PC-9 (cell line): ENCODE measurements at regions of chr15 and their contacts with region 1.

Region 1: GRCh38 chr15:49066374-49066773 is 20.1 kb upstream of the SECISBP2L start:
- DNase-seq: no peak
- H3K4me3 ChIP-seq: no peak overlapping the region
- H3K27ac ChIP-seq: no peak overlapping the region
- H3K4me1 ChIP-seq: no peaks in the 10 kb centered on the region
- H3K27me3 ChIP-seq: peaks cover 8% of the 10 kb centered on the region; the same call in 1 of the 2 replicates
- CTCF ChIP-seq: no peak

Region 2: GRCh38 chr15:49637857-49638256 is 571.5 kb after region 1 on chr15:
- CTCF ChIA-PET with region 1: no interaction called
- POLR2A ChIA-PET with region 1: no interaction called
- intact Hi-C with region 1: loop called (anchors 5 kb)
- DNase-seq: no peak
- H3K4me3 ChIP-seq: no peak overlapping the region
- H3K27ac ChIP-seq: no peak overlapping the region
- H3K4me1 ChIP-seq: no peaks in the 10 kb centered on the region
- H3K27me3 ChIP-seq: no peaks in the 10 kb centered on the region
- CTCF ChIP-seq: no peak